Activated CD4-positive, alpha-beta T cell treated with anti-CD3 and anti-CD28 coated beads for 36 hours (primary cell): ENCODE measurements at regions of chr20 and their contacts with region 1.

Region 1: GRCh38 chr20:34069341-34070078 is 42.5 kb downstream of the EIF2S2 start:
- DNase-seq: peak; percentile 71
- ATAC-seq: peak; percentile 83
- H3K4me3 Mint-ChIP-seq: no peak overlapping the region
- H3K27ac Mint-ChIP-seq: no peak overlapping the region
- H3K4me1 Mint-ChIP-seq: peaks cover 46% of the 10 kb centered on the region
- H3K27me3 Mint-ChIP-seq: no peaks in the 10 kb centered on the region

Region 2: GRCh38 chr20:33862709-33863403 is 206.7 kb before region 1 on chr20:
- CTCF ChIA-PET with region 1: interaction called, 3 read pairs
- POLR2A ChIA-PET with region 1: no interaction called
- intact Hi-C with region 1: loop called (anchors 1 to 5 kb)
- DNase-seq: peak; percentile 69
- ATAC-seq: peak; percentile 60
- H3K4me3 Mint-ChIP-seq: no peak overlapping the region
- H3K27ac Mint-ChIP-seq: no peak overlapping the region
- H3K4me1 Mint-ChIP-seq: peaks cover 20% of the 10 kb centered on the region
- H3K27me3 Mint-ChIP-seq: no peaks in the 10 kb centered on the region

Region 3: DNA sequence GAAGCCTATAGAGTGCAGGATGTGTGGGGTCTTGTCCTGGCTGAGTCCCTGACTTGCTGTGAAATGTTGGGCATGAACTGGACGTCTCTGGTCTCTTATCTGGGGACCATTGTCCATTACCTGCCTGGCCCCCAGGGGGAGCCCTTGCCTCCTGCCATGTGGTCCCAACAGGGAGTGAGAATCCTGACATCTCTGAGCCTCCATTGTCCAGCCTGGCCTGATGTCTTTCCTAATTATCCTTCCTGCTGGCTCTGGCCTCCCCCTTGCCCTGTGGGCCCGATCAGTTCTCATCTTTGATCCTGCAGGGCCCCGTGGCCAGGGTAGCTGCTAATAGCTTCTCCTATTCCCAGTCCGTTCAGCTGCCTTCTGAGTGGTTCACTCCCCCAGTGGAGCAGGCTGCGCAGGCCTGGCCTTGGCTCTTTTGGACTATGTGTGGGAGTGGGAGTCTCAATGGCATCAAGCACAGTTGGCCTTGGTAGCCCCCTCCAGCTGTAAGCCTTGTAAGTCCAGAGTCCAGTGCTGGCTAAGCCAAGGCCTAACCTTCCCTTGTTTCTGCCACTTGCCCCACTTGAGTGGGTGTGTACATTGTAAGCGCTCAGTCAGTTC is 153.7 kb before region 1 on chr20:
- CTCF ChIA-PET with region 1: interaction called, 7 read pairs
- POLR2A ChIA-PET with region 1: no interaction called
- intact Hi-C with region 1: loop called in 1 of 2 experiments (anchors 1 kb)
- DNase-seq: peak; percentile 76
- ATAC-seq: peak; percentile 66
- H3K4me3 Mint-ChIP-seq: no peak overlapping the region
- H3K27ac Mint-ChIP-seq: no peak overlapping the region
- H3K4me1 Mint-ChIP-seq: peaks cover 15% of the 10 kb centered on the region
- H3K27me3 Mint-ChIP-seq: no peaks in the 10 kb centered on the region

Region 4: GRCh38 chr20:33933469-33933909 is 136.0 kb before region 1 on chr20:
- CTCF ChIA-PET with region 1: interaction called, 32 read pairs
- POLR2A ChIA-PET with region 1: no interaction called
- intact Hi-C with region 1: loop called (anchors 1 to 5 kb)
- DNase-seq: peak; percentile 78
- ATAC-seq: peak; percentile 96
- H3K4me3 Mint-ChIP-seq: no peak overlapping the region
- H3K27ac Mint-ChIP-seq: no peak overlapping the region
- H3K4me1 Mint-ChIP-seq: no peaks in the 10 kb centered on the region
- H3K27me3 Mint-ChIP-seq: no peaks in the 10 kb centered on the region

Region 5: GRCh38 chr20:33947709-33948295 is 121.7 kb before region 1 on chr20:
- CTCF ChIA-PET with region 1: interaction called, 5 read pairs
- POLR2A ChIA-PET with region 1: no interaction called
- intact Hi-C with region 1: loop called (anchors 1 to 5 kb)
- DNase-seq: peak; percentile 76
- ATAC-seq: peak; percentile 84
- H3K4me3 Mint-ChIP-seq: no peak overlapping the region
- H3K27ac Mint-ChIP-seq: no peak overlapping the region
- H3K4me1 Mint-ChIP-seq: no peaks in the 10 kb centered on the region
- H3K27me3 Mint-ChIP-seq: peaks cover 4% of the 10 kb centered on the region

Region 6: DNA sequence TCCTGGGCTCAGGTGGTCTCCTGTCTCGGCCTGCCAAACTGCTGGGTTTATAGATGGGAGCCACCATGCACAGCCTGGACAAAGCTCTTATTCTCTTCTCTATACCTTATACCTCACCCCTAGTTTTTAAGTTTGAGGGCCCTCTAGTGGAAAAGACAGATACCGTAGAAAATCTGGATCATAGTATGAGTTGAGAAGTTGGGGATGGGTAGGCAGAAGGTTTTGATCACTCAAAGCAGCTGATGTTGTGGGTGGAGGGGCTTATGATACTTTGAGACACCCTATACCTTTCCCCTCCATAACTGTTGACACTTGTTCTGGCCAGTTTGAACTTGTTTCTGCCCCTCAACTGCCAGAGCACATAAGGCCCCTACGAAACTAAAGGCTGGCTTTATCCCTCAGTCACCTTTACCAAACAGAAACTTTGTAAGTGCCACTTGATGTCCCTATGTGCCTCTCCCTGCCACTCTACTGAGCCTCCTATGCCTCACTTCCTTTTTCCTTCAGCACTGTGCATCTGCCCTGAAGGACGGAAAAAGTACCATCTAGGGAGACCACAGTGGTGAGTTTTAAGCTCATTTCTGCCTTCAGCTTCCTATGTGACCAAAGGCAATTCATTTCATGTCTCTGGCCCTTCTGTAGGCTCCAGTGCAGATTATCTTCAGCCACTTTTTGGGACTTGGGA is 47.2 kb before region 1 on chr20:
- CTCF ChIA-PET with region 1: interaction called, 10 read pairs
- POLR2A ChIA-PET with region 1: no interaction called
- intact Hi-C with region 1: no loop called
- DNase-seq: no peak
- ATAC-seq: peak; percentile 83
- H3K4me3 Mint-ChIP-seq: no peak overlapping the region
- H3K27ac Mint-ChIP-seq: peak overlapping the region; percentile 49
- H3K4me1 Mint-ChIP-seq: peaks cover 78% of the 10 kb centered on the region
- H3K27me3 Mint-ChIP-seq: no peaks in the 10 kb centered on the region

Region 7: GRCh38 chr20:34083137-34083536 is 13.6 kb after region 1 on chr20:
- CTCF ChIA-PET with region 1: interaction called, 11 read pairs
- POLR2A ChIA-PET with region 1: no interaction called
- intact Hi-C with region 1: no loop called
- DNase-seq: no peak
- ATAC-seq: no peak
- H3K4me3 Mint-ChIP-seq: no peak overlapping the region
- H3K27ac Mint-ChIP-seq: no peak overlapping the region
- H3K4me1 Mint-ChIP-seq: no peaks in the 10 kb centered on the region
- H3K27me3 Mint-ChIP-seq: no peaks in the 10 kb centered on the region

Region 8: DNA sequence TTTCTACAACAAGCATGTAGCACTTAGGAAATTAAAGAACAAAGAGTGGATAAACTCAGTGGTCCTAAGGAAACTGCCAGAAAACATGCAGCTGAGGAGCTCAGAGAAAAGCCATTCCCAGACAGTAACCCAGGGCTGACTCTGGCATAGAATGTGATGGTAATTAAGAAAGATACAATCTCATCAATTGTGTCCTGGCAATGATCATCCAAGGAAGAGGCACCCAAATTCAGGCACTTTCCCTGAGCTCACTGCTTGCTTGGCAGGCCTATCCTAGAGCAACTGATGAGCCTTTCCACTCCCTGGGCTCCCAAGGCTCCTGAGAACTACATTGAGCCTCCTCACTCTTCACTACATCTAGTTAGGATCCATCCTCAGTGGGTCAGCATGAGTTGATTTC is 26.3 kb after region 1 on chr20:
- CTCF ChIA-PET with region 1: no interaction called
- POLR2A ChIA-PET with region 1: no interaction called
- intact Hi-C with region 1: no loop called
- DNase-seq: no peak
- ATAC-seq: no peak
- H3K4me3 Mint-ChIP-seq: no peak overlapping the region
- H3K27ac Mint-ChIP-seq: no peak overlapping the region
- H3K4me1 Mint-ChIP-seq: peaks cover 8% of the 10 kb centered on the region
- H3K27me3 Mint-ChIP-seq: no peaks in the 10 kb centered on the region

Region 9: DNA sequence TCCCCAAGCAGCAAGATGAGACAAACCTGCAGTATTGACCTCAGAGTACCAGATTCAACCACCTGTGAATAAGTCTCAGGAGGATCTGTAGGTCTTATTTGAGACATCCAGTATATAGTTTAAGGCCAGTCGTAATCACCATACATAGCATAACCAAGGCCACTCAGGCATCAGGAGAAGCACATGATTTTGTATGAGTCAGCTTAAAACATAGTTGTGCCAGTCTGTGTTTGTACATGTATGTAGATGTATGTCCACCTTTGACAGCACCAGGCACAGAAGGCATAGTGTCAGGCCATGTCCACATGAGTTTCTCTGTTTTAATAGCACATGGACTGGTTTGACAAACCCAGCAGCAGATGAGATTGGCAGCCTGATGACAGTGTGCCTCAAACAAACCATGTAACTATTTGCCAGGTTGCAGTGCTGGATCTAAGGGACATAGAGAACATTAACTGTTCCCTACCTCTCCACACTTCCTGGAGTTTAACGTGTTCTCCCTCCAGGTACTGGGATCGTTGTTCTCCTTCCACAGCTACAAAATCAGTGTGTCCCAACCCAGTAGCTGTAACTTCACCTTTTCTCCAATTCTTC is 163.1 kb after region 1 on chr20:
- CTCF ChIA-PET with region 1: no interaction called
- POLR2A ChIA-PET with region 1: no interaction called
- intact Hi-C with region 1: no loop called
- DNase-seq: no peak
- ATAC-seq: no peak
- H3K4me3 Mint-ChIP-seq: no peak overlapping the region
- H3K27ac Mint-ChIP-seq: no peak overlapping the region
- H3K4me1 Mint-ChIP-seq: no peaks in the 10 kb centered on the region
- H3K27me3 Mint-ChIP-seq: no peaks in the 10 kb centered on the region